ENCODE measurements at regions of chr11 and their contacts with region 1.

Region 1: DNA sequence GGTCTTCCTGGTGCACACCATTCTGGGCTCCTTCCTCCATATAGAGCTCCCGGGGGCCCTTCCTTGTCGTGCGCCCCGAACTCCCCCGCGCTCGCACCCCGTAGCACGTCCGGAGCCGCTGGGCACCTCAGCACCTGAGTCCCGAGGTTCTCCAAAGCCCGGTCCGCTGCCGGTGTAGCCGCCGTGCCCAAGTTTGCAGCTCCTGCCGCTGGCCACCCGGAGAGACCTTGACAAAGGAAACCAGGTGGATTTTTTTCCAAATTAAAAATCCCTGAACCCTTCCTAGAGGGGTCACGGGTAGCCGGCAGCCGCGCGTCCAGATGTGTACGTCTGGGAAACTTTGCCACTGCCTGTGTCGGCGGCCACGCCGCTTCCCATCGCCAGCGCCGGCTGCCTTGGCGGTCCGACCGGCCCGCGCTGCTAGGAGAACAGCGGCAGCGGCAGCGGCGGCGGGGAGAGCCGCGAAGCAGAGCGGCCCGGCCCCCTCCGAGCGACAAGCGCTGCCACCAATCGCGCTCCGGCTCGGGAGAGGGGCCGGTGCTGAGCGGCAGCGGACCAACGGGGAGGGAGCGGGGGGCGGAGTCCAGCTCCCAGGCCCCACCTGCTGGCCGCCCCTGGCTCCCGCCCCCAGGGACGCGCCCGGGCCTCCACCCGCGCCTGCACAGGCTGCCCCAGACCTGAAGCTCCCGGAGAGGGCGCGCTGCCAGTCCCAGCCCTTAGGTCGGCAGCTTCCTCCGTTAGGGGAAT is at the start of gene GALNT18:
- DNase-seq: peak; percentile 94 to 96
- ATAC-seq: peak; percentile 95 to 98 (median 97)
- H3K4me3 ChIP-seq: peak within 1 kb of the TSS; percentile 69
- H3K27ac ChIP-seq: peak within 1 kb of the TSS; percentile 72
- H3K4me1 ChIP-seq: peaks cover 10% of the 10 kb centered on the region
- H3K27me3 ChIP-seq: no peaks in the 10 kb centered on the region
- CTCF ChIP-seq: peak; percentile 48
- total RNA-seq, gene GALNT18: 8.3 to 11.3 (median 9.0) TPM

Region 2: GRCh38 chr11:11538277-11538960 is 83.3 kb before region 1 on chr11:
- intact Hi-C with region 1: loop called (anchors 5 to 10 kb)
- DNase-seq: peak in 1 of 2 donors; percentile 32
- ATAC-seq: peak in 3 of 4 donors; percentile 15 to 60 (median 50)
- H3K4me3 ChIP-seq: no peak overlapping the region
- H3K27ac ChIP-seq: peak overlapping the region; percentile 19
- H3K4me1 ChIP-seq: peaks cover 34% of the 10 kb centered on the region
- H3K27me3 ChIP-seq: no peaks in the 10 kb centered on the region
- CTCF ChIP-seq: no peak

Region 3: GRCh38 chr11:11608783-11609232 is 12.9 kb before region 1 on chr11:
- intact Hi-C with region 1: no loop called
- DNase-seq: no peak
- ATAC-seq: no peak
- H3K4me3 ChIP-seq: no peak overlapping the region
- H3K27ac ChIP-seq: no peak overlapping the region
- H3K4me1 ChIP-seq: no peaks in the 10 kb centered on the region
- H3K27me3 ChIP-seq: no peaks in the 10 kb centered on the region
- CTCF ChIP-seq: no peak